Calu3 (cell line): ENCODE measurements at regions of chr3 and their contacts with region 1.

Region 1: DNA sequence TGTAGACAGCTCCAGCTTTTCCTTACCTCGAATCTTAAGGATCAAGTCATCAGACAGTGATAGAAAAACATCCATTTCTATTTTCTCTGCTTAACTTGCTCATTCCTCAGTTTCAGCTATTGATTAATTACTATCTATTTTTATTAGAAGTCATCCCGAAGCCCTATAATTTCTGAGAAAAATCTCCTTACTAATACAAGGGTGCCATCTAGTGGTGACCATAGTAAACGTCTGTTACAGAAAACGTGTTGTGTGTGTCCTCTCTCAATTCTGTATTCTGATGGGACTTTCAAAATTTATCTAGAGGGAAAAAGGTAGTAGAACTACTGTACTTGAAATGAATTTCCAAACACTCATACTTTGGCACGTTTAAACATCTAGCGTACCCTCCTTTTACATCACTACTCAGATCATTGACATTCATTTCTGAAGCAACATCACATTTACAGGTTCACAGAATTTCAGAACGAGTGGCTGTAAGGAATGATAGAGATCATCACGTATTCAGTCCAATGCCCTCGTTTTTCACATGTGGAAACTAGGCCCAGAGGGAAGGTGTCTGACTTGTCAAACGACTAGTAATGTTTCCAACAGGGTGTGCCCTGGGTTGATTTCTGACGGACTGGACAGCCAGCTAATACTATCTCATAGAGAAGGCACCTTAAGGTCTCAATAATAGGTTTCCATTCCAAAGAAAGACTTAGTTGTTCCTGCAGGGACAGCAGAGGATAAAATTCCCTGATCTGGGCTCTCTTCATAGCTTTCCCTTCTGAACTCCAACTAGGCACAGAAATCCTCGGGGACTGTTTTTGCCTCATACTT is 25.6 kb downstream of the HACD2 start:
- DNase-seq: peak; percentile 14
- H3K4me3 Mint-ChIP-seq: no peak overlapping the region
- H3K27ac Mint-ChIP-seq: no peak overlapping the region
- H3K4me1 Mint-ChIP-seq: peaks cover 16% of the 10 kb centered on the region
- H3K27me3 Mint-ChIP-seq: no peaks in the 10 kb centered on the region
- CTCF ChIP-seq: peak; percentile 50

Region 2: GRCh38 chr3:123412811-123413604 is 146.2 kb before region 1 on chr3:
- CTCF ChIA-PET with region 1: no interaction called
- intact Hi-C with region 1: no loop called
- DNase-seq: no peak
- H3K4me3 Mint-ChIP-seq: no peak overlapping the region
- H3K27ac Mint-ChIP-seq: no peak overlapping the region
- H3K4me1 Mint-ChIP-seq: peaks cover 26% of the 10 kb centered on the region
- H3K27me3 Mint-ChIP-seq: no peaks in the 10 kb centered on the region
- CTCF ChIP-seq: no peak

Region 3: GRCh38 chr3:123508178-123508577 is 51.1 kb before region 1 on chr3:
- CTCF ChIA-PET with region 1: no interaction called
- intact Hi-C with region 1: loop called (anchors 10 kb)
- DNase-seq: no peak
- H3K4me3 Mint-ChIP-seq: no peak overlapping the region
- H3K27ac Mint-ChIP-seq: no peak overlapping the region
- H3K4me1 Mint-ChIP-seq: no peaks in the 10 kb centered on the region
- H3K27me3 Mint-ChIP-seq: no peaks in the 10 kb centered on the region
- CTCF ChIP-seq: no peak